ENCODE measurements at regions of chr20 and their contacts with region 1.

Region 1: DNA sequence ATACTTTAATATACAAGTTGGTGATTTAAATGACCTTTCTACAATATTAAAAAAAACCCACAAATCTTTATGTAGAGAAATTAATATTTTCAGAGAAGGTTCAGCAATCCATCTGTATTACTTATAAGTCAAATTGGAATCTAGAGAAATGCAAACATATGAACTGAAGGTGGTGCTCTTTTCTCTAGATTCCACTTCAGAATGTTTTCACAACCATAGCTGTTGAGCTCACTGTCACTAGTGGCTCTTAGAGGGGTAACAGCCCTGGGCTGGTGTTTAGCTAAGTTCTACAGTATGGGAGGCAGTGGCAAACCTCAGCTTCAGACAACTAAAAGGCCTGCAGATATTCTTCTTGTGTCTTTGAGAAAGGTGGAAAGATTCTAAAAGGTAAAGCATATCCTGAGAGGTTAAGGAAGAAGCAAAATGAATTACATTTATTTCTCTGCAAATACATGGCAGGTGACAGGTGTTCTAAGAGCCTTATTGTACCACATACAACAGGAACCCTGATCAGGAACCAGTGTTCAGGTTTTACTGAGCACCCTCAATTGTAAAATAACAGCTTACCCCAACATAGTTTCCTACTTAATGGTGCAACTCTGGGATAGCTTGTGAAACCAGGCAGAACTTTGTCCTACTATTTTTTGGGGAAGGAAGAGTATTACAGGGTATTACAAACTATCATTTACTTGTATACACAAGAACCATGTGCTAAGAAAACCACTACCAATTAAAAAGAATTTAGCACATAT is 56.6 kb upstream of the SAMHD1 start:
- DNase-seq: no peak
- H3K4me3 Mint-ChIP-seq: no peak overlapping the region
- H3K27ac Mint-ChIP-seq: peak overlapping the region; percentile 72
- H3K4me1 Mint-ChIP-seq: peaks cover 21% of the 10 kb centered on the region
- H3K27me3 Mint-ChIP-seq: no peaks in the 10 kb centered on the region

Region 2: DNA sequence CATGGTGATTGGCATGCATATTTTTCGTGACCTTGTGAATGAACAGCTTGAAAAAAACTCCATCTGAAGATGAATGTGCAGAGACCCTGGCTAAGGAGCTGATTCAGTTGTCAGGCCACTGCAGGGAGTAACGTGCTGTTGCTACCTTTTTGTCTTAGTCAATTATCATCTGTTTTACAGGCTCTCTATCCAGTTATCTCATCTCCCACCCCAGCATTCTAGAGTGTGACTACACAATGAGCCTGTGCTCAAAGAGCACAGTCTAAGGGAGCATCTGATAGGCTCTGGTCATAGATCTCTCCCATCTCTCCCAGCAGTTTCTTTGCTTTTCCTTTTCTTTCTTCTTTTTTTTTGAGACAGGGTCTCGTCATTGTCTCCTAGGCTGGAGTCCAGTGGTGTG is 307.6 kb before region 1 on chr20:
- intact Hi-C with region 1: no loop called
- DNase-seq: no peak
- H3K4me3 Mint-ChIP-seq: no peak overlapping the region
- H3K27ac Mint-ChIP-seq: no peak overlapping the region
- H3K4me1 Mint-ChIP-seq: no peaks in the 10 kb centered on the region
- H3K27me3 Mint-ChIP-seq: no peaks in the 10 kb centered on the region

Region 3: DNA sequence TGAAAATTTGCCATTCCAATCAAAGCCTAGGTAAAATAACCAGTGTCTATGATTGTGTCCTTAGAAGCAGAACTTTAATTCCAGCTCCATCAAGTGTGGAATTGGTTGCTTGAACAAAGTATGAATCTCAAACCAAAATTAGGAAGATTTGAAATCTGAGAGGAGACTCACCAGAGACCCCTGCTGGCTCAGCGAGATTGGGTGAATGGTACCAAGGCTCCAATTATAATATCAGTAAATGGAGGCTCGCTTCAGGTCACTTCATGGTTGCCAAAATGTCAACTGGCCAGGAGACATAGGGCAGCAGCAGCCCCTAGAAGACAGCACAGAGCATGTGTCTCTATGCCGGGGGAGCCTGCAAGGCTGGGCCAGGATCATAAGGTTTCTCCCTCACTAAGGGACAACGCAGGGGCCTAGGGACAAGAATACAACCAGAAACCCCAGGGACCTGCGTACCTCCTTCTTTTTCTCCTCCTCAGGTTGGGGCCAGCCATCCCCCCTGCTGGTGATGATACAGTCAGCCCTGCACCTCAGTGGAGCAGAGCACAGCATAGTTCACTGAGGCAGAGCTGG is 73.7 kb after region 1 on chr20:
- intact Hi-C with region 1: loop called (anchors 1 kb)
- DNase-seq: no peak
- H3K4me3 Mint-ChIP-seq: no peak overlapping the region
- H3K27ac Mint-ChIP-seq: no peak overlapping the region
- H3K4me1 Mint-ChIP-seq: peaks cover 21% of the 10 kb centered on the region
- H3K27me3 Mint-ChIP-seq: no peaks in the 10 kb centered on the region